ENCODE measurements at regions of chr2 and their contacts with region 1.

Region 1: GRCh38 chr2:212595037-212595654 is 56.5 kb upstream of the ERBB4 start:
- DNase-seq: peak; percentile 72
- ATAC-seq: peak; percentile 75
- H3K4me3 ChIP-seq: no peak overlapping the region
- H3K27ac ChIP-seq: no peak overlapping the region
- H3K4me1 ChIP-seq: peaks cover 28% of the 10 kb centered on the region
- H3K27me3 ChIP-seq: no peaks in the 10 kb centered on the region
- CTCF ChIP-seq: peak; percentile 82

Region 2: GRCh38 chr2:212489719-212490346 is 105.3 kb before region 1 on chr2:
- CTCF ChIA-PET with region 1: no interaction called
- POLR2A ChIA-PET with region 1: no interaction called
- intact Hi-C with region 1: no loop called
- DNase-seq: no peak
- ATAC-seq: no peak
- H3K4me3 ChIP-seq: no peak overlapping the region
- H3K27ac ChIP-seq: no peak overlapping the region
- H3K4me1 ChIP-seq: no peaks in the 10 kb centered on the region
- H3K27me3 ChIP-seq: no peaks in the 10 kb centered on the region
- CTCF ChIP-seq: no peak

Region 3: GRCh38 chr2:212548450-212548819 is 46.7 kb before region 1 on chr2:
- CTCF ChIA-PET with region 1: no interaction called
- POLR2A ChIA-PET with region 1: no interaction called
- intact Hi-C with region 1: no loop called
- DNase-seq: peak; percentile 68
- ATAC-seq: peak; percentile 71
- H3K4me3 ChIP-seq: no peak overlapping the region
- H3K27ac ChIP-seq: no peak overlapping the region
- H3K4me1 ChIP-seq: no peaks in the 10 kb centered on the region
- H3K27me3 ChIP-seq: peaks cover 10% of the 10 kb centered on the region; the same call in 1 of the 2 replicates
- CTCF ChIP-seq: peak; percentile 68

Region 4: DNA sequence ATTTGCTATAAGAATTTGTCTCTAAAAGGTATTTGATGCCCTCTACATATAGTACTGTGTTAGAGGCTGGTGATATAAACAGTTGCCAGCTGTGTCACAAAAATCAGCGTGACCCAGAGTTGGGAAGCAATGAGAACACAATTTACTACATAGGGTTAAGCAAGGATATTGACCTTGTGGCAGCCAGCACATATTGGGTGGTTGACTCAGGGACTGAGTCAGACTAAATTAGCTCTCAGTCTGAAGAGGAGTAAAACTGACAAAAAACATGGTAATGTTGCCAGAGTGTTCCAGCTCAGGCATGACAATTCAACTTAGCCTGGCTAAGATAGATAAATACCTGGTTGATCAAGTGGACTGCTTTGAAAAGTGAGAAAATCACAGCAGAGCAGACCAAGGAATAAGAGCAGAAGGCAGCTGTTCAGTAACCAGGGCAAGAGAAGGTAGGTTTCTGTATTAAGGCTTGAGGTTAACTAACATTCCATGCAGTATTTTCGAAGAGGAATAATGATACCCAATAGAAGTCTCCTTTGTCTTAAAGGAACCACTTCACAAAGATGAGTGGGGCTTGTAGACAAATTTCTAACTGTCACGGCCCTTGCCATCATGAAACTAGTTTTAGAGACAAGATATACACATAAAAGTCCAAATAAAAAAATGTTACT is 51.7 kb after region 1 on chr2:
- CTCF ChIA-PET with region 1: interaction called, 3 read pairs
- POLR2A ChIA-PET with region 1: no interaction called
- intact Hi-C with region 1: loop called (anchors 2 kb)
- DNase-seq: peak; percentile 94
- ATAC-seq: peak; percentile 93
- H3K4me3 ChIP-seq: peak overlapping the region; percentile 28; the same call in 1 of the 2 replicates
- H3K27ac ChIP-seq: peak overlapping the region; percentile 87
- H3K4me1 ChIP-seq: peaks cover 40% of the 10 kb centered on the region
- H3K27me3 ChIP-seq: no peaks in the 10 kb centered on the region
- CTCF ChIP-seq: no peak

Region 5: GRCh38 chr2:212777020-212777491 is 181.9 kb after region 1 on chr2:
- CTCF ChIA-PET with region 1: no interaction called
- POLR2A ChIA-PET with region 1: no interaction called
- intact Hi-C with region 1: loop called (anchors 1 kb)
- DNase-seq: peak; percentile 77
- ATAC-seq: peak; percentile 63
- H3K4me3 ChIP-seq: peak overlapping the region; percentile 45
- H3K27ac ChIP-seq: no peak overlapping the region
- H3K4me1 ChIP-seq: peaks cover 11% of the 10 kb centered on the region; the same call in 1 of the 2 replicates
- H3K27me3 ChIP-seq: no peaks in the 10 kb centered on the region
- CTCF ChIP-seq: peak; percentile 79

Region 6: DNA sequence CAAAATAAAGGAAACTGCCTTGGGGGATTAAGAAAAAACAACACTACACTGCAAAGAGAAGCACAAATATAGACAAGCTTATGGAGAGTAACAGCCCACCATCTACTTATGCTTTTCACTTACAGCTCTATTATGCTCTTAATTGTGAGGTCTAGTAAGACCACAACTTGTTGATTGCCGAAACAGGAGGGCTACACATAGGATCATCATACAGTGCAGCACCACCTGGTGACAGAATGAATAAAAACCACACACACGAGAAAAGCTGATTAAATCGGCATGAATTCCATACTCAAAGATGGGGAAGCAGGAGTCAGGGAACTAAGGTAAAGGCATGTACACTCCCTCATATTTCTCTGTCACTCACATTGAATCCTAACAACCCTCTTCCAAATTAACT is 297.0 kb after region 1 on chr2:
- CTCF ChIA-PET with region 1: no interaction called
- POLR2A ChIA-PET with region 1: no interaction called
- intact Hi-C with region 1: loop called (anchors 2 kb)
- DNase-seq: peak; percentile 75
- ATAC-seq: peak; percentile 79
- H3K4me3 ChIP-seq: no peak overlapping the region
- H3K27ac ChIP-seq: no peak overlapping the region
- H3K4me1 ChIP-seq: no peaks in the 10 kb centered on the region
- H3K27me3 ChIP-seq: no peaks in the 10 kb centered on the region
- CTCF ChIP-seq: peak; percentile 81

Region 7: GRCh38 chr2:213238753-213239495 is 643.8 kb after region 1 on chr2:
- CTCF ChIA-PET with region 1: no interaction called
- POLR2A ChIA-PET with region 1: no interaction called
- intact Hi-C with region 1: loop called (anchors 10 kb)
- DNase-seq: peak; percentile 90
- ATAC-seq: peak; percentile 95
- H3K4me3 ChIP-seq: peak overlapping the region; percentile 51
- H3K27ac ChIP-seq: peak overlapping the region; percentile 78
- H3K4me1 ChIP-seq: peaks cover 26% of the 10 kb centered on the region
- H3K27me3 ChIP-seq: no peaks in the 10 kb centered on the region
- CTCF ChIP-seq: no peak

Measured in PC-3 (cell line).